ENCODE measurements at regions of chr11 and their contacts with region 1.

Region 1: DNA sequence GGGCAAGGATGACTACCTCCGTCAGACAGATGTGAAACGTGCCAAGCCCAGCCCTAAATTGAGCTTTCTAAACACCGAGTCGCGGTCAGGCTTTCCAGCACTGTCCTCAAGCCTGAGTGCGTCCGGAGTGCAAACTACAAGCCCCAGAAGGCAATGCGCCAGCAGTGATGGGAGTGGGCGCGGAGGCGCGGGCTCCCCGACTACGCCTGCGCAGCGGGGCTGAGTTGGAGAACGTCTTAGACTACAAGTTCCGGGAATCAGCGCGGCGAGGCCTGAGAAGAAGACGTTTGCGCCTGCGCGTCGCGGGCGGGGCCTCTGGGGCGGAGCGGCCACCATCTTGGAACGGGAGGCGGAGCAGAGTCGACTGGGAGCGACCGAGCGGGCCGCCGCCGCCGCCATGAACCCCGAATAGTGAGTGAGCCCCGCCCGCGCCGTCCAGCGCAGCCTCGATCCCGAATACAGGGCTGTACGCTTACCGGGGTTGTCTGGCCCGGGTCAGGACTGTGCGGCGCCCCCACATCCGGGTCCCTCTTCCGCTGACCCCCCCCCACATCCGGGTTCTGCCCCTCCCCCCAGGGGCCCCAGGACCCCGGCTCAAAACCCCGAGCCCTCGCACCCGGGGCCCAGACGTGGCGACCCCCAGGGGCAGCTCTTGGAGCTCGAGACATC is at the start of gene RAB1B:
- DNase-seq: peak; percentile 100
- ATAC-seq: peak; percentile 88
- H3K4me3 Mint-ChIP-seq: peak within 1 kb of the TSS; percentile 91
- H3K27ac Mint-ChIP-seq: peak within 1 kb of the TSS; percentile 91
- H3K4me1 Mint-ChIP-seq: peaks cover 49% of the 10 kb centered on the region
- H3K27me3 Mint-ChIP-seq: no peaks in the 10 kb centered on the region
- total RNA-seq, gene RAB1B: 146 to 155 TPM

Region 2: GRCh38 chr11:66282468-66283386 is 14.3 kb after region 1 on chr11:
- CTCF ChIA-PET with region 1: interaction called, 85 read pairs
- DNase-seq: peak; percentile 99
- ATAC-seq: peak; percentile 88
- H3K4me3 Mint-ChIP-seq: no peak overlapping the region
- H3K27ac Mint-ChIP-seq: peak overlapping the region; percentile 36
- H3K4me1 Mint-ChIP-seq: peaks cover 26% of the 10 kb centered on the region
- H3K27me3 Mint-ChIP-seq: peaks cover 3% of the 10 kb centered on the region

Region 3: GRCh38 chr11:66302656-66303055 is 34.2 kb after region 1 on chr11:
- CTCF ChIA-PET with region 1: no interaction called
- DNase-seq: no peak
- ATAC-seq: no peak
- H3K4me3 Mint-ChIP-seq: no peak overlapping the region
- H3K27ac Mint-ChIP-seq: no peak overlapping the region
- H3K4me1 Mint-ChIP-seq: no peaks in the 10 kb centered on the region
- H3K27me3 Mint-ChIP-seq: peaks cover 2% of the 10 kb centered on the region

Region 4: GRCh38 chr11:66545701-66546367 is 277.4 kb after region 1 on chr11 and contains the start of gene ZDHHC24:
- CTCF ChIA-PET with region 1: no interaction called
- DNase-seq: peak; percentile 95
- ATAC-seq: peak; percentile 90
- H3K4me3 Mint-ChIP-seq: peak within 1 kb of the TSS; percentile 86
- H3K27ac Mint-ChIP-seq: peak within 1 kb of the TSS; percentile 75
- H3K4me1 Mint-ChIP-seq: peaks cover 30% of the 10 kb centered on the region
- H3K27me3 Mint-ChIP-seq: peaks cover 11% of the 10 kb centered on the region
- total RNA-seq, gene ZDHHC24: 18.7 to 19.8 TPM

Measured in activated CD8-positive, alpha-beta memory T cell treated with anti-CD3 and anti-CD28 coated beads, Interleukin-2, amount 10 ng/mL, durations not matched to agents 7 days and 5 days (primary cell).